Posterior cingulate gyrus (tissue), 11 donors: ENCODE measurements at regions of chr22 and their contacts with region 1.

Region 1: DNA sequence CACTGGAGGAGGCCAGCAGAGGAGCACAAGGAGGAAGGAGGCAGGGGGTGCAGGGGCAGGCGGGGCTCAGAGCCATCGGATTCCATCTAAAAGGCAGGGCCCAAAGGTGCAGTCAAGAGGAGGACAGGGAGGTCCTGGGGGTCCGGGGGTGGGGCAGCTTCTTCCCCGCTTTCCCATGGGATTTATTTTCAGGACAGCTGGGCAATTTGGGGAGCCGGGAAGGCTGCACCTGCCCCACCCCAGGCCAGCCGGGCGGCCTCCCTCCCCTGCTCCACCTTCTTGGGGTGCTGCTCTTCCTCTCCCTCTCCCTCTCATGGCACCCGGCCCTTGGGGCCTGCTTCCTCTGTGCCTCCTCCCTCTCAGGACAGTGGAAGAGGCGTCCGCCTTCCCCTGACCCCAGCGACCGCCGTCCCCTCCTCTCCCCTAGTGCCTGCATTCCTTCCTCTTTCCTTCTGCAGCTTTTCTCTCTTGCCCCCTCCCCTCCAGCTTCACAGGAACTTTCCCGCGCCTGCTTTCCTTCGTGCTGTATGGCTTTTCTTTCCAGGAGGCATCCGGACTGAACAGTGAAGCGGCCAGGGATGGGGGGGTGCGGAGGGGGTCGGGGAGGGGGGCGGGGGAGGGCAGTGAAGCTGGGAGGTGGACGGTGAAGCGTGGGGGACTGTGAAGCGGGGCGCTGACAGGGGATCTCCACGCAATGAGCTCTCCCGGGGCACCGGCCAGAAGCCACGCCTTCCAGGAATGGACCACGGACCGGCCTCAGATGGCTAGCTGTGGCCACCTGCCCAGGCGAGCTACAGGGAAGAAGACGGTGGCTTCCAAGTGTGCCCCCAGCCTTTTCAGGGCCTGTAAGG is 26.9 kb downstream of the APOBEC3H start:
- DNase-seq: peak in 1 of 10 donors; percentile 59

Region 2: DNA sequence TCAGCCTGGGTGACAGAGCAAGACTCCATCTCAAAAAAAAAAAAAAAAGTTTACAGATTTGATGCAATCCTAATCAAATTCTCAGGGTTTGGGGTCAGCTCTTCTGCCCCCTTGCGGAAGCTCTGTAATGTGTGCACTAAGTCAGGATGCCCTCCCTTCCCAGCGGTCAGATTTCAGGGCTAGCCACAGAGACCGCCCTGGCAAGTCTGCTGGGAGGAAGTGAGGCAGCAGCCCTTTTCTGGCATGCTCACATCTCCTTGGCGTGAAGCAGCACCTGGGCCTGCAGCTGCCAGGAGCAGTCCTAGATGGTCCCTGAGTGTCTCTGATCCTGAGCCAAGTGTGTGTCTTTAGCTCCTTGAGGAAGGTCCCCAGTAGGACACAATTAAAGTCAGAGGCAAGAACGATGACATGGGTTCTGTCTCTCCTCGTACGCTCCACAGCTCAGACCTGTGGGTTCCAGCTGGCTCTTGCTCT is 120.8 kb before region 1 on chr22:
- intact Hi-C with region 1: loop called (anchors 10 kb)
- DNase-seq: peak in 7 of 10 donors; percentile 13 to 87 (median 50)

Region 3: GRCh38 chr22:39195436-39195835 is 71.5 kb after region 1 on chr22:
- intact Hi-C with region 1: no loop called
- DNase-seq: no peak

Region 4: DNA sequence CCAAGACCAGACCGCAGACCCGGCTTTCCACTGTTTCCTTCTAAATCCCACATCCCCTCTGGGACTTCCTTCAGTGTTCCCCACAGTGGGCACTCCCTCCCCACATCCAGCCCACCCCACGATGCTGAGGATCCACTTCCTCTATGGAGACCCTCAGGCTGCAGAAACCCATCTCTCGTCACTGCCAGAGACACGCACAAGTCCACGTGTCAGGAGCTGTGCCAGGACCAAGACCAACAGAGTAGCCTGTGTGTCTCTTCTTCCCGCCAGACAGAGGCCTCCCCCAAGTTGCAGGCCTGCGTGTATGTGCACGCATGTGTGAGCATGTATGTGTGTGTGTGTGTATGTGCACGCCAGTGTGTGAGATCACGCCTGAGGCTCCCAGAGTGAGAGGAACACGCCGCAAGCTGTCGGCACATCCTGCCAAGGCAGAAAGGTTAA is 99.2 kb after region 1 on chr22:
- intact Hi-C with region 1: no loop called
- DNase-seq: peak in 4 of 10 donors; percentile 20 to 61 (median 52)